ENCODE measurements at regions of chr3 and their contacts with region 1.

Region 1: GRCh38 chr3:2458816-2459215 is 360.1 kb downstream of the CNTN4 start:
- DNase-seq: peak; percentile 62
- H3K4me3 ChIP-seq: no peak overlapping the region
- H3K27ac ChIP-seq: no peak overlapping the region
- H3K4me1 ChIP-seq: no peaks in the 10 kb centered on the region
- H3K27me3 ChIP-seq: no peaks in the 10 kb centered on the region
- CTCF ChIP-seq: no peak

Region 2: GRCh38 chr3:2303566-2303965 is 155.2 kb before region 1 on chr3:
- CTCF ChIA-PET with region 1: no interaction called
- POLR2A ChIA-PET with region 1: no interaction called
- intact Hi-C with region 1: no loop called
- DNase-seq: peak; percentile 45
- H3K4me3 ChIP-seq: no peak overlapping the region
- H3K27ac ChIP-seq: no peak overlapping the region
- H3K4me1 ChIP-seq: no peaks in the 10 kb centered on the region
- H3K27me3 ChIP-seq: no peaks in the 10 kb centered on the region
- CTCF ChIP-seq: no peak

Region 3: GRCh38 chr3:2657971-2658370 is 199.2 kb after region 1 on chr3:
- CTCF ChIA-PET with region 1: no interaction called
- POLR2A ChIA-PET with region 1: interaction called, 11 read pairs
- intact Hi-C with region 1: no loop called
- DNase-seq: no peak
- H3K4me3 ChIP-seq: no peak overlapping the region
- H3K27ac ChIP-seq: no peak overlapping the region
- H3K4me1 ChIP-seq: no peaks in the 10 kb centered on the region
- H3K27me3 ChIP-seq: no peaks in the 10 kb centered on the region
- CTCF ChIP-seq: no peak